ENCODE measurements at regions of chrX and their contacts with region 1.

Region 1: DNA sequence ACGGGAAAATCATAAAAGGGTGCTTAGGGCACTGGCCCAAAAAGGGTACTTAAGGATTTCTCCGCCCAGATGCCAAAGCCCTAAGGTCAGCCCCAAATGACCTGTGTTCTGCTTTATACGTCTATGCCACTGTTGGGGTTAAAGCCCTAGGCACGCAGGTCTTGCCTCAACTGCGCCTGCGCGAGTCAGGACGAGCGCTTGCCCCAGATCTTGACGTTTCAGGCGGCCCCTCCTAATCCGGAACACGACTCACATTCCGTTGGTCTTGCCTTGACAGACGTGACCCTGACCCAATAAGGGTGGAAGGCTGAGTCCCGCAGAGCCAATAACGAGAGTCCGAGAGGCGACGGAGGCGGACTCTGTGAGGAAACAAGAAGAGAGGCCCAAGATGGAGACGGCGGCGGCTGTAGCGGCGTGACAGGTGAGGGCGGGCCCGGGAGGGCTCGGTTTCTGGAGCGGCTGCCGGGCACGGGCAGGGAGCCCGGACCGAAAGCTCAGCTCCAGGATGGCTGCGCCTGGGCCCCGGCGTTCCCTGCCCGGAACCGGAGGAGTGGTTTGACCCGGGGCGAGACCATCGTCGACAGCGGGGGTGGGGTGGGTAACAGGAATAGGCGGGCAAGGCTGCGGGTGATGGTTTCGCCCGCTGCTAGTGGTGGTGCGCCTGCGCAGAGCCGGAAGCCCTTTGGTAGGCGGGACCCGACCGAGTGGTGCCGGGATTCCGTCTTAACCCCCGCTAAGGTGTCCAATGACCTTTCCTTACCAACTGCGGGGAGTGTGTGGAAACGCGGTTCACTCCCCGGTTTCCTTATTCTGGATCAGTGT is at the start of gene ARAF:
- DNase-seq: peak; percentile 94
- H3K4me3 Mint-ChIP-seq: peak within 1 kb of the TSS; percentile 85
- H3K27ac Mint-ChIP-seq: peak within 1 kb of the TSS; percentile 97
- H3K4me1 Mint-ChIP-seq: peaks cover 35% of the 10 kb centered on the region
- H3K27me3 Mint-ChIP-seq: no peaks in the 10 kb centered on the region
- total RNA-seq, gene ARAF: 85.3 and 86.1 TPM in 2 replicates

Region 2: DNA sequence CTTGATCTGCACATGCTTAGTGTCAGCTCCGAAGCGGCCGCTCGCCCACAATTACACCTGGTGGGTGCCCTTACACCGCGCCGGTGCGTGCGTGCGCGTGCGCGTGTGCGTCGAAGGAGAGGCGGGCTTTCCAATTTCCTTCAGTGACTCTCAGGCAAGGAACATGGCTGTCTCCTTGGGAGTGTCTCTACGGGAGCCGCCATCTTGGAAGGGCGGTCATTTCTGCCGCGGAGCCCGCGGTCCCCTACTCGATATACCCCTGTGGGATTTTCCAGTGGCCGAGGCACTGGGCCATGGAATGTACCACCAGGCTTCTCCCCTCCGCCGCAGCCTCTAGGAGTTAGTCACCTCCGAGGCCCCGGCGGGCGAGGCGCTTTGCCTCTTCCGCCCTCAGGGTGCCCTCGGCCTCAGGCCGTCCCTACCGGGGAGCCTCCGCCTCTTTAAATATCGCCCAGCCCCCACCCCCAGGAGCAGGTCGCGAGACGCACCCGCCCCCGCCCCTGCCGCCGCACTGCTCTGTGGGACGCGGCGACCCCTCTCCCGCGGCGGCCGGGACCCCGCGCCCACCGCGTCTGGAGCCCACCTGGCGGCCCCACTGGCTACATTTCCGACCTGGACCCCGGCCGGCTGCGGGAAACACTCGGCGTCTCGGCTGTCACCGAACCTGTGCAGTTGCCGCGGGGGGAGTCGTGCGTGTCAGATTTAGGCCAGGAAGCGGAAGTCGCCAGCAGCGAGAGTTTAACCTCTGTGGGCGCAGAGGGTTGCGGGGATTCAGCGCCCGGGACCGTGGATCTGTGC is 78.3 kb before region 1 on chrX and contains the start of gene ZNF41:
- intact Hi-C with region 1: loop called (anchors 5 kb)
- DNase-seq: peak; percentile 63
- H3K4me3 Mint-ChIP-seq: peak within 1 kb of the TSS; percentile 89
- H3K27ac Mint-ChIP-seq: peak within 1 kb of the TSS; percentile 90
- H3K4me1 Mint-ChIP-seq: peaks cover 25% of the 10 kb centered on the region
- H3K27me3 Mint-ChIP-seq: no peaks in the 10 kb centered on the region
- total RNA-seq, gene ZNF41: 8.7 and 9.7 TPM in 2 replicates

Region 3: DNA sequence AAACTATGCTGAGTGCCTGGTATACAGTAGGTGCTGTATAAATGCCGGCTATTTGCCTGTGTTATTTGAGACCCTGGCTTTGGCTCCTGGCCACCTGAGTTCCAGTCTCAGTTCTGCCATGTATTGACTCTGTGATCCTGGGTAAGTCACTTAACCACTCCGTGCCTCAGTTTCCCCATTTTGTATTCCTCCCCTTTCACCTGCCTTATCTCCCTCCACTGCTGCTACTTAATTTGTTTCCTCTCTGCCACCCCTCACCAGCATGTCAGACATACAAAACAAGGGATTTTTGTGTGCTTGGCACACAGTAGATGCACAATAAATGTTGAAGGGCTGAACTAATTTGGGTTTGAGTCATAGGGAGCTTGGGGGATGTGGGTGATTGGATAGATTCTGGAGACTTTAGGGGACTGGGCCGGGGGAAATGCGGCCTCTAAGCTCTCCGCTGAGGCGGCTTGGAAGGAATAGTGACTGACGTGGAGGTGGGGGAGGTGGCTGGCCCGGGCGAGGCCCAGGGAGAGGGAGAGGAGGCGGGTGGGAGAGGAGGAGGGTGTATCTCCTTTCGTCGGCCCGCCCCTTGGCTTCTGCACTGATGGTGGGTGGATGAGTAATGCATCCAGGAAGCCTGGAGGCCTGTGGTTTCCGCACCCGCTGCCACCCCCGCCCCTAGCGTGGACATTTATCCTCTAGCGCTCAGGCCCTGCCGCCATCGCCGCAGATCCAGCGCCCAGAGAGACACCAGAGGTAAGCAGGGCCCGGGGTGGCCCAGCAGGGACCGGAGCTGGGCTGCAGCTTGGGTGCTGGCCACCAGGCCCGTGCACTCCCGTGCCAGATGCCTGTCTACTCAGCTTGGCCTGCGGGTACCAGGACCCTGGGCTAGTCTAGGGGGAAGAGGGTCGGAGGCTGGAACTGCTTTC is 20.9 kb after region 1 on chrX and contains the start of gene TIMP1:
- intact Hi-C with region 1: loop called (anchors 2 kb)
- DNase-seq: peak; percentile 78
- H3K4me3 Mint-ChIP-seq: peak within 1 kb of the TSS; percentile 64
- H3K27ac Mint-ChIP-seq: peak within 1 kb of the TSS; percentile 56
- H3K4me1 Mint-ChIP-seq: peaks cover 34% of the 10 kb centered on the region
- H3K27me3 Mint-ChIP-seq: no peaks in the 10 kb centered on the region
- total RNA-seq, gene TIMP1: 76.5 and 77.1 TPM in 2 replicates

Region 4: DNA sequence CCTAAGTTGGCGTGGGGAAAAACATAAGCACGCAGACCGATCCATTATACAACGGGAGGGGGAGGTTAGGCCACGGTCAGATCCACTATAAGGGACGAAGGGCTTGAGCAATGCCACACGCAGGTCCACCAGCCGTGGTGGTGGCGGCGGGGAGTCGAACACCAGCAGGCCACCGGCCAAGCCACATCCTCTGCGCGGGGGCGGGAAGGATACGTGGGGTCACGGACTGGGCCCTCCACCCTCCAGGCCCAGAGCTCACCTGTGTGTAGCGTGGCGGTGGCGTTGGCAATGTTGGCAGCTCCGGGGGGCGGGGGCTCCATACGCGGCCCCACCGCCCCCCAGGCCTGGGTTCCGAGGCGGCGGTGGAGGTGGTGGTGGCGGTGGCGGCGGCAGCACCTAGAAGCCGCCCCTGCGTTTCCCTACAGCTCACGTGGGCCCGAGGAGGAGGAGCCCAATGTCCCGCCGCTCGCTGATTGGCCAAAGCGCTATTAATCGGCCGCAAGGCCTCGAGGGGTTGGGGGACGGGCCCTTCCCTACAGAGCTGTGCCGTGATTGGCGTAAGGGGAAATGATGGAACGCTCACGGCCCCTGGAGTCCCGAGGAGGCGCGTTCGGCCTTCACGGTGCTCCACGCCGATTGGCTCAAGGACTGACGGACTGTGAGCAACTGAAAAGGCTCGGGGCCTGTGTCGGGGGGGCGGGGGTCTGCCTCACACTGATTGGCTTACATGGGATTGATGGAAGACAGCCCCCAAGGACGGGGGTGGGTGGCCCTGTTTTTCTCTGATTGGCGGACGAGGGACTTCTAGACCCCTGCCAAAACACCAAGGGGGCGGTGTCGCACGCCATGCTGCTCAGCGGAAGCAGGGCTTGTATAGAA is 89.4 kb after region 1 on chrX and contains the start of gene ELK1:
- intact Hi-C with region 1: loop called (anchors 1 kb)
- DNase-seq: peak; percentile 89
- H3K4me3 Mint-ChIP-seq: peak within 1 kb of the TSS; percentile 93
- H3K27ac Mint-ChIP-seq: peak within 1 kb of the TSS; percentile 97
- H3K4me1 Mint-ChIP-seq: peaks cover 50% of the 10 kb centered on the region
- H3K27me3 Mint-ChIP-seq: no peaks in the 10 kb centered on the region
- total RNA-seq, gene ELK1: 108 and 110 TPM in 2 replicates

Region 5: GRCh38 chrX:47658684-47659515 is 97.9 kb after region 1 on chrX and contains the start of gene UXT:
- intact Hi-C with region 1: loop called (anchors 2 kb)
- DNase-seq: peak; percentile 91
- H3K4me3 Mint-ChIP-seq: peak within 1 kb of the TSS; percentile 87
- H3K27ac Mint-ChIP-seq: peak within 1 kb of the TSS; percentile 97
- H3K4me1 Mint-ChIP-seq: peaks cover 41% of the 10 kb centered on the region
- H3K27me3 Mint-ChIP-seq: no peaks in the 10 kb centered on the region
- total RNA-seq, gene UXT: 204 and 208 TPM in 2 replicates